ENCODE measurements at regions of chr10 and their contacts with region 1.

Region 1: DNA sequence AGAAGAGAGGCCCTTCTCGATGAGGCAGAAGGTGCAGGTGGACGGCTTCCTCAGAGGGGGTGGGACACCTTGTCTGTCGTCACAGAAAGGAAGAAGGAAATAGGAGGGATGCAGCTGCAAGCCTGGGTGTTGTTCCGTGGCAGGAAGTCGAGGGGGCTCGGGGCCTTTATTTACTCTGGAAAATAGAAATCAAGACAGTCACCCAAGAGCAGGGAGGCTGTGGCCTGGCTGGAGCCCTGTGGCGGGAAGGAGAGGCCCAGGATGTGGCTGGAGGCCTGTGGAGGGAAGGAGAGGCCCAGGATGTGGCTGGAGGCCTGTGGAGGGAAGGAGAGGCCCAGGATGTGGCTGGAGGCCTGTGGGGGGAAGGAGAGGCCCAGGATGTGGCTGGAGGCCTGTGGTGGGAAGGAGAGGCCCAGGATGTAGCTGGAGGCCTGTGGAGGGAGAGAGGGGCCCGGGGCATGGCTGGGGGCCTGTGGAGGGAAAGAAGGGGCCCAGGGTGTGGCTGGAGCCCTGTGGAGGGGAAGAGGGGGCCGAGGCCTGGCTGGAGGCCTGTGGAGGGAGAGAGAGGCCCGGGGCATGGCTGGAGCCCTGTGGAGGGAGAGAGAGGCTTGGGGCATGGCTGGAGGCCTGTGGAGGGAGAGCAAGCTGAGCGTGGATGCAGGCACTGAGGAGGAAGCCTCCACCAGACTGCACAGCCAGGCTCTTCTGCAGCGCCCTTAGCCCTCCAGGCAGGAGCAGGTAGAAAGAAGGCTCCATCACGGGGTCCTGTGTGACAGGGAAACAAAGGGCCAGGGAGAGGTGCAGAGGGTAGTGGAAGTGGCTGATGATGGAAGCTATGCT is 97.3 kb upstream of the SFMBT2 start:
- DNase-seq: peak; percentile 89
- H3K4me3 Mint-ChIP-seq: peak overlapping the region; percentile 52
- H3K27ac Mint-ChIP-seq: peak overlapping the region; percentile 90
- H3K4me1 Mint-ChIP-seq: peaks cover 45% of the 10 kb centered on the region
- H3K27me3 Mint-ChIP-seq: no peaks in the 10 kb centered on the region

Region 2: GRCh38 chr10:7464691-7465090 is 43.4 kb before region 1 on chr10:
- intact Hi-C with region 1: no loop called
- DNase-seq: no peak
- H3K4me3 Mint-ChIP-seq: no peak overlapping the region
- H3K27ac Mint-ChIP-seq: no peak overlapping the region
- H3K4me1 Mint-ChIP-seq: peaks cover 3% of the 10 kb centered on the region
- H3K27me3 Mint-ChIP-seq: peaks cover 3% of the 10 kb centered on the region

Region 3: DNA sequence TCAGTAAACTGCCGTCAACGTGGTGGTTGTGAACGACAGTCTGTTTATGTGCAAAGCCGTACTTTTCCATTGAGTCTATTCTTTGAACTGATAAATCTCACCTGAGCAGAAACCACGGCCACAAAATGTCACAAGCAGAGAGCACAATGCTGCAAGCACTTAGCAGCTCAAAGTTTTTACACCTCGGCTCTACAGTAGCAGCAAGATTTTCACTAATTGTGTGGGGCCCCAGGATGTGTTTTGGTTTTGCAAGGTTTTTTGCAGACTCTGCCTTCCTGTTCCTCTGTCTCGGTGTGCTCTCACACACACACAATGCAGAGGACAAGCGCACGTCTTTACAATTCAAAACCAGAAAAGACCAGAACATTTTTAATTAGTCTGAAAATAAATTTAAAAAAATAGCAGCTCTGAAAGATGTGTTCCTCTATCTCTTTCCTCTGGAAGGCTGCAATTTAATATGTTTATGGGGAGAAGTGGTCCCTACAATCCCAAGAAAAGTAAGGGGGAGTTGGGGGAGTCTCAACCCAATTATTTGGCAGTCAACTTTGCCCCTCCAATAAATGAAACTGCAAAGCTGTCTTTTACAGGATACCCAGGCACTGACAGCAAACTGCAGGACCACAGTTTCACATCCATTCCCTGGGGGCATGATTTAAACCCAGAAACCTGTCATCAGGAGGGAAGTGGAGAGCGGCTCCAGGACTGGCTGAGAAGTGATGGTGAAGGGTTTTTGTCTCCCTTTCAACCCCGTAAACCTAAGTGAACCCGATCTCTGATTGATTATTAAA is 23.5 kb before region 1 on chr10:
- intact Hi-C with region 1: loop called (anchors 1 kb)
- DNase-seq: peak; percentile 92
- H3K4me3 Mint-ChIP-seq: peak overlapping the region; percentile 69
- H3K27ac Mint-ChIP-seq: peak overlapping the region; percentile 79
- H3K4me1 Mint-ChIP-seq: peaks cover 67% of the 10 kb centered on the region
- H3K27me3 Mint-ChIP-seq: no peaks in the 10 kb centered on the region